WTC11 (cell line): ENCODE measurements at regions of chr10 and their contacts with region 1.

Region 1: DNA sequence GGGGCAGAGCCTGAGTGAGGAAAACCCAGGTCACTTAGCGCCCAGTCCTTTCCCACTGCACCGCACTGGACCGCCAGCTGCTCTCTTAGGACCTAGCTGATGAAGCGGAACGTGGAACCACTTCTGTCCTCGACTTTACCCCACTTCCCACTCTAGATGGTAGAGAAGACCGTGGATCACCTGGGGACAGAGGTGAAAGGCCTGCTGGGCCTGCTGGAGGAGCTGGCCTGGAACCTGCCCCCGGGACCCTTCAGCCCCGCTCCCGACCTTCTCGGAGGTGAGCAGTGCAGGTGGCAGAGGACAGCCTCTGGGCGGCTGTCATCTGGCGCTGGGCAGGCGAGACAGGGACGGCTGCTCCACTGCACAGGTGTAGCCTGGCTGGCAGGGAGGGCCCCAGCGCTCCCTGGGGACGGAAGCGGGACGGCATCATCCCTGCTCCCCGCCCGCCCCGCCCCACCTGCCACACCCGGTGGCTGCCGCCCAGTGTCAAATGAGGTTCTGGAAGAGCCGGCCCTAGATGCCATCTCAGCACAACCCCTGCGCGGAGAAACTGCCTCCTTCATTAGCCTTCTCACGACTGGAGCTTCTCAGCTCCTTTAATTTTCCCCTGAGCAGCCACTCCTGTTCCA is 11.7 kb downstream of the PLAC9 start:
- DNase-seq: peak; percentile 24
- ATAC-seq: peak; percentile 67
- H3K4me3 Mint-ChIP-seq: no peak overlapping the region; the same call in 1 of the 2 replicates
- H3K27ac Mint-ChIP-seq: no peak overlapping the region
- H3K4me1 Mint-ChIP-seq: peaks cover 6% of the 10 kb centered on the region
- H3K27me3 Mint-ChIP-seq: no peaks in the 10 kb centered on the region
- CTCF ChIP-seq: 0 out of 2 replicates have a peak, but pooled peaks have one; percentile 10

Region 2: DNA sequence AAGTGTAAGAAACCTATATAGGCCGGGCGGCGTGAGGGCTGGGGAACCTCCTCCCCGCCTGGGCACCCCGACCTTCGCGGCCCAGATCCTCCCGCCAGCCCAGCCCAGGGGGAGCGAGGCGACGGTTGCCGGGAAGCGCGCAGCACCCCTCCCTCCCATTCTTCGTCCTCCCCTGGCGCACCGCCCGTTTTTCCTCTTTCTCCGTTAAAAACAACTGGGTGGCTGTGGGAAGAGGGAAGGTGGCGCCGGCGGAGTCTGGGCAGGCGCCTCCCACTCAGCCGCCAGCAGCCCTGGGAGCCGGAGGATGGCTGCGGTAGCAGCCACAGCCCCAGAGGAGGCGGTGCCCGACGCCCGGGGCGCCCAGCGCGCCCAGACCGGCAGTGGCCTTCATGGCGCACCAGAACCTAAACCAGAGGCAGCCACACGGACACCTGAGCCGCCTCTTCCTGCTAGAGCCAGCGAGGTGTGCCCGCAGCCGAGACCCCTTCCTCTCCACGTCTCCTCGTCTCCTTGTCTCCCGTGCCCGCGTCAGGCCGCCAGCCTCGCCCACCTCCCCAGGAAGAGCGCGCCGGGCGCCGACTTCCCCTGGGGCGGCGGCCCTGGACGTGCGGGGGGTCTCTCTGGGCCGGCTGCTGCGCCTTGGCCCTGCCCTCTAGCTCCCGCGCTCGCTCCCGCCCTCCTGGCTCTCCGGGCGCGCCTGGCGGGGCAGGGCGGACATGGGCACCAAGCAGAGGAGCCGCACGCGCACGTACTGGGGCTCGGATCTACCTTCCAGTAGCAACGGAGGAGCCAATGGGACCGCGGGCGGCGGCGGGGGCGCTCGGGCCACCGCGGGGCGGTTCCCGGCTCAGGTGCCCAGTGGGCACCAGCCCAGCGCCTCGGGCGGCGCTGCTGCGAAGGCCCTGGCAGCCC is 162.5 kb before region 1 on chr10:
- CTCF ChIA-PET with region 1: no interaction called
- POLR2A ChIA-PET with region 1: no interaction called
- DNase-seq: peak; percentile 66
- ATAC-seq: peak; percentile 82
- H3K4me3 Mint-ChIP-seq: peak overlapping the region; percentile 72
- H3K27ac Mint-ChIP-seq: no peak overlapping the region
- H3K4me1 Mint-ChIP-seq: peaks cover 25% of the 10 kb centered on the region
- H3K27me3 Mint-ChIP-seq: peaks cover 56% of the 10 kb centered on the region
- CTCF ChIP-seq: no peak

Region 3: GRCh38 chr10:80057171-80057570 is 87.0 kb before region 1 on chr10:
- CTCF ChIA-PET with region 1: interaction called, 22 read pairs
- POLR2A ChIA-PET with region 1: no interaction called
- DNase-seq: no peak
- ATAC-seq: no peak
- H3K4me3 Mint-ChIP-seq: no peak overlapping the region
- H3K27ac Mint-ChIP-seq: no peak overlapping the region
- H3K4me1 Mint-ChIP-seq: peaks cover 3% of the 10 kb centered on the region; the same call in 1 of the 2 replicates
- H3K27me3 Mint-ChIP-seq: no peaks in the 10 kb centered on the region
- CTCF ChIP-seq: no peak

Region 4: GRCh38 chr10:80132299-80133139 is 11.7 kb before region 1 on chr10 and contains the start of gene PLAC9:
- CTCF ChIA-PET with region 1: interaction called, 22 read pairs
- POLR2A ChIA-PET with region 1: no interaction called
- DNase-seq: peak; percentile 63
- ATAC-seq: peak; percentile 73
- H3K4me3 Mint-ChIP-seq: peak within 1 kb of the TSS; percentile 74
- H3K27ac Mint-ChIP-seq: no peak within 1 kb of the TSS
- H3K4me1 Mint-ChIP-seq: peaks cover 21% of the 10 kb centered on the region
- H3K27me3 Mint-ChIP-seq: peaks cover 31% of the 10 kb centered on the region
- CTCF ChIP-seq: no peak
- total RNA-seq, gene PLAC9: 4.6 to 7.3 TPM (median 6.6 TPM) in 3 replicates

Region 5: GRCh38 chr10:80161331-80162083 is 17.3 kb after region 1 on chr10:
- CTCF ChIA-PET with region 1: interaction called, 10 read pairs
- POLR2A ChIA-PET with region 1: no interaction called
- DNase-seq: no peak
- ATAC-seq: peak; percentile 78
- H3K4me3 Mint-ChIP-seq: no peak overlapping the region
- H3K27ac Mint-ChIP-seq: peak overlapping the region; percentile 78
- H3K4me1 Mint-ChIP-seq: peaks cover 18% of the 10 kb centered on the region
- H3K27me3 Mint-ChIP-seq: no peaks in the 10 kb centered on the region
- CTCF ChIP-seq: peak; percentile 17; the same call in 1 of the 2 replicates

Region 6: GRCh38 chr10:80260295-80261243 is 116.4 kb after region 1 on chr10:
- CTCF ChIA-PET with region 1: interaction called, 22 read pairs
- POLR2A ChIA-PET with region 1: no interaction called
- DNase-seq: peak; percentile 70
- ATAC-seq: peak; percentile 26
- H3K4me3 Mint-ChIP-seq: no peak overlapping the region
- H3K27ac Mint-ChIP-seq: no peak overlapping the region
- H3K4me1 Mint-ChIP-seq: peaks cover 17% of the 10 kb centered on the region
- H3K27me3 Mint-ChIP-seq: peaks cover 15% of the 10 kb centered on the region
- CTCF ChIP-seq: peak; percentile 79